Mucosa of descending colon (tissue), 3 donors: ENCODE measurements at regions of chr12 and their contacts with region 1.

Region 1: DNA sequence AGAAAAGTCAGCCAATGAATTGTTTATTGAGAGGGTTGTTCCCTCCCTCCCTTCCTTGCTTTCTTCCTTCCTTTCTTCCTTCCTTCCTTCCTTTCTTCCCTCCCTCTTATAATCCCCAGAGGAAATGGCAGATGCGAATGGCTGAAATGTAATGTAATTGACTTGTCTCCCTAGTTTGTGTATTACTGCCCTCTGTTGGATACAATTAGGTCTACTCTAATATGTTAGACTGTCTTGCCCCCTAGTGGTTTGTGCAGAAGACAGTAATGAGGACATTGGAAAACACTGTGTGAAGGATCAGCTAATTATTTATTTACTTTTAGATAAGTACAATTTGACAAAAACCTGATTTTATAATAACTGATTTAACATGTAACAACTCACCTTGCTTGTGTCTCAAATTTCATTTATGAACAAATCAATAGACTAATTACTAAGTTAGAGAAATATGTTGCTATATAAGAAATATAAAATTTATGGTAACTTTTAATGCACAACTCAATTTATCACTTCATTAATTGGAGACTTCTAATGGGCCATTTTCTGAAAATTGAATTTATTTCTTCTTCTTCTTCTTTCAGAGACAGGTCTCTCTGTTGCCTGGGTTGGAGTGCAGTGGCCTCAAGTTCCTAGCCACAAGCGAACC is 229.8 kb upstream of the LRIG3 start:
- DNase-seq: peak in 1 of 3 donors; percentile 60
- ATAC-seq: peak; percentile 98
- H3K4me3 ChIP-seq: no peak overlapping the region
- H3K4me1 ChIP-seq: no peaks in the 10 kb centered on the region
- CTCF ChIP-seq: peak; percentile 68

Region 2: GRCh38 chr12:58346032-58346632 is 804.0 kb before region 1 on chr12:
- intact Hi-C with region 1: loop called in 1 of 2 experiments (anchors 10 kb)
- DNase-seq: no peak
- ATAC-seq: peak; percentile 52
- H3K4me3 ChIP-seq: no peak overlapping the region
- H3K4me1 ChIP-seq: no peaks in the 10 kb centered on the region
- CTCF ChIP-seq: peak; percentile 68

Region 3: GRCh38 chr12:59113831-59114615 is 36.1 kb before region 1 on chr12:
- intact Hi-C with region 1: loop called in 1 of 2 experiments (anchors 5 kb)
- DNase-seq: peak; percentile 57 to 88 (median 75)
- ATAC-seq: peak; percentile 94
- H3K4me3 ChIP-seq: no peak overlapping the region
- H3K4me1 ChIP-seq: no peaks in the 10 kb centered on the region
- CTCF ChIP-seq: peak; percentile 78